CD8-positive, alpha-beta T cell (primary cell): ENCODE measurements at regions of chr13 and their contacts with region 1.

Region 1: DNA sequence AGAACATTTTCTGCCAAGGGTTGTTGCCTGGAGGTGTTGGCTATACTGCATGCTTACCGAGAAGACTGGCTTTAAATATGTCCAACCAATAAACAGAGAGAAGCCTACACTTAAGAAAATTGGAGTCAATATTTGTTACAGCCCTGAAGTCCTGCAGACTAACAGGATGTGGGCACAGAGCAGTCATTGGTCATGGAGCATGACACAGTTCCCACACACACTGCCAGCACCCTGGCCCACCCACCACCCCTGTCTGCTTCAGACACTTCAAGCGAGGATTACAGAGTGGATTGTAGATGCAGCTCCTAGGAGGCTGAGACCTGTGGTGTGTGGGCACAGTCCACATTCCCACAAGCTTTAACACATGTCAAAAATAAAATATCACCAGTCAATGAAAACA is 21.0 kb upstream of the SERP2 start:
- DNase-seq: peak in 4 of 9 experiments; percentile 26 to 49 (median 31)
- ATAC-seq: peak; percentile 48
- H3K4me3 ChIP-seq: no peak overlapping the region
- H3K4me3 Mint-ChIP-seq: no peak overlapping the region
- H3K27ac ChIP-seq: peak overlapping the region in 1 of 2 experiments; percentile 56
- H3K27ac Mint-ChIP-seq: peak overlapping the region; percentile 61
- H3K4me1 ChIP-seq: no peaks in the 10 kb centered on the region
- H3K4me1 Mint-ChIP-seq: peaks cover 18% of the 10 kb centered on the region
- H3K27me3 ChIP-seq: no peaks in the 10 kb centered on the region
- H3K27me3 Mint-ChIP-seq: no peaks in the 10 kb centered on the region
- CTCF ChIP-seq: no peak

Region 2: DNA sequence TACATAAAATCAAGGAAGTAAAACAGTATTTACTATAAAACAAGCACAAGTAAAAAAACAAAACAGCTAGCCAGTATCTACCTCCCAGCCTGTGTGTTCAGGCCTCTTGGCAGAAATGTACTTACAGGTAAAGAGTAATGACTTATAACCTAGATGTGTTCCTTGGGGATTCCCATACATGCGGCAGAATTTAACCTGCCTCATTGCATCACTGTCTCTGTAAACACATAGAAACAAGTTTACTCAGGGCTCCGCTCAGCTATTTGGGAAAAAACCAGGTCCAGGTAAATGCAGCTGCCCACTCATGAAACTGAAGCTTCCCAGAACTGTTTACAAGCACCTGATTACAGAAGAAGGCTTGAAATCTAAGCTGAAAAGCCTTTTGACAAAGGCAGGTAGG is 29.7 kb before region 1 on chr13:
- CTCF ChIA-PET with region 1: no interaction called
- POLR2A ChIA-PET with region 1: no interaction called
- intact Hi-C with region 1: loop called in 1 of 2 experiments (anchors 1 kb)
- DNase-seq: no peak
- ATAC-seq: no peak
- H3K4me3 ChIP-seq: no peak overlapping the region
- H3K4me3 Mint-ChIP-seq: no peak overlapping the region
- H3K27ac ChIP-seq: no peak overlapping the region
- H3K27ac Mint-ChIP-seq: no peak overlapping the region
- H3K4me1 ChIP-seq: no peaks in the 10 kb centered on the region
- H3K4me1 Mint-ChIP-seq: no peaks in the 10 kb centered on the region
- H3K27me3 ChIP-seq: no peaks in the 10 kb centered on the region
- H3K27me3 Mint-ChIP-seq: no peaks in the 10 kb centered on the region
- CTCF ChIP-seq: no peak

Region 3: GRCh38 chr13:44385847-44386246 is 33.2 kb after region 1 on chr13:
- CTCF ChIA-PET with region 1: no interaction called
- POLR2A ChIA-PET with region 1: no interaction called
- intact Hi-C with region 1: loop called in 1 of 2 experiments (anchors 2 kb)
- DNase-seq: no peak
- ATAC-seq: no peak
- H3K4me3 ChIP-seq: no peak overlapping the region
- H3K4me3 Mint-ChIP-seq: no peak overlapping the region
- H3K27ac ChIP-seq: no peak overlapping the region
- H3K27ac Mint-ChIP-seq: no peak overlapping the region
- H3K4me1 ChIP-seq: no peaks in the 10 kb centered on the region
- H3K4me1 Mint-ChIP-seq: no peaks in the 10 kb centered on the region
- H3K27me3 ChIP-seq: no peaks in the 10 kb centered on the region
- H3K27me3 Mint-ChIP-seq: peaks cover 2% of the 10 kb centered on the region
- CTCF ChIP-seq: no peak